ENCODE measurements at regions of chr19 and their contacts with region 1.

Region 1: GRCh38 chr19:41298348-41298964 is 11.5 kb upstream of the CCDC97 start:
- DNase-seq: peak; percentile 78
- H3K4me3 ChIP-seq: no peak overlapping the region
- H3K27ac ChIP-seq: peak overlapping the region; percentile 84 to 89 (median 85)
- H3K4me1 ChIP-seq: peaks cover 27 to 53% (median 40%) of the 10 kb centered on the region in 4 donors
- H3K27me3 ChIP-seq: no peaks in the 10 kb centered on the region
- CTCF ChIP-seq: no peak
- EP300 ChIP-seq: no peak
- POLR2A ChIP-seq: peak; percentile 47

Region 2: GRCh38 chr19:39996811-39997594 is 1301.5 kb before region 1 on chr19 and contains the start of gene ZNF546:
- in situ Hi-C with region 1: no loop called
- intact Hi-C with region 1: no loop called
- DNase-seq: peak; percentile 93
- H3K4me3 ChIP-seq: peak within 1 kb of the TSS; percentile 45 to 70 (median 55)
- H3K27ac ChIP-seq: peak within 1 kb of the TSS; percentile 72 to 87 (median 85)
- H3K4me1 ChIP-seq: peaks cover 10 to 16% (median 12%) of the 10 kb centered on the region in 4 donors
- H3K27me3 ChIP-seq: no peaks in the 10 kb centered on the region
- CTCF ChIP-seq: no peak
- EP300 ChIP-seq: no peak
- POLR2A ChIP-seq: peak; percentile 85
- total RNA-seq, gene ZNF546: 0.60 to 8.1 (median 2.4) TPM

Region 3: DNA sequence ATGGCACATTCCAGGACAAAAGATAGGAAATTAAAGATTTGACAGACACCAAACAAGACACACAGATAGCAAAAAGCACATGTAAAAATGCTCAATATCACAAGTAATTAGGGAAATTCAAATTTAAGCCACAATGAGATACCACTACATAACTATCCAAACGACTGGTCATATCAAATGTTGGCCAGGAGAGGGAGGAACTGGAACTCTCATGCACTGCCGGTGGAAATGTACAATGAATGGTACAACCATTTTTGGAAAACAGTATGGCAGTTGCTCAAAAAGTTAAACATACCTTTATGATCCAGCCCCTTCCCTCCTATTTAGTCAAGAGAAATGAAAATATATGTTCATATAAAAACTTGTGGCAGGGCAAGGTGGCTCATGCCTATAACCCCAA is 142.2 kb before region 1 on chr19:
- in situ Hi-C with region 1: no loop called
- intact Hi-C with region 1: no loop called
- DNase-seq: no peak
- H3K4me3 ChIP-seq: no peak overlapping the region
- H3K27ac ChIP-seq: no peak overlapping the region
- H3K4me1 ChIP-seq: peaks cover 0 to 4% (median 1%) of the 10 kb centered on the region in 4 donors
- H3K27me3 ChIP-seq: no peaks in the 10 kb centered on the region
- CTCF ChIP-seq: no peak
- EP300 ChIP-seq: no peak
- POLR2A ChIP-seq: no peak

Region 4: GRCh38 chr19:41226053-41226873 is 72.2 kb before region 1 on chr19:
- in situ Hi-C with region 1: no loop called
- intact Hi-C with region 1: no loop called
- DNase-seq: peak; percentile 77
- H3K4me3 ChIP-seq: peak overlapping the region; percentile 22 to 57 (median 48)
- H3K27ac ChIP-seq: peak overlapping the region; percentile 85 to 92 (median 88)
- H3K4me1 ChIP-seq: peaks cover 3 to 25% (median 20%) of the 10 kb centered on the region in 4 donors
- H3K27me3 ChIP-seq: peaks cover 3% of the 10 kb centered on the region
- CTCF ChIP-seq: peak in 3 of 5 experiments; percentile 13 to 40 (median 15)
- EP300 ChIP-seq: no peak
- POLR2A ChIP-seq: peak; percentile 57

Region 5: DNA sequence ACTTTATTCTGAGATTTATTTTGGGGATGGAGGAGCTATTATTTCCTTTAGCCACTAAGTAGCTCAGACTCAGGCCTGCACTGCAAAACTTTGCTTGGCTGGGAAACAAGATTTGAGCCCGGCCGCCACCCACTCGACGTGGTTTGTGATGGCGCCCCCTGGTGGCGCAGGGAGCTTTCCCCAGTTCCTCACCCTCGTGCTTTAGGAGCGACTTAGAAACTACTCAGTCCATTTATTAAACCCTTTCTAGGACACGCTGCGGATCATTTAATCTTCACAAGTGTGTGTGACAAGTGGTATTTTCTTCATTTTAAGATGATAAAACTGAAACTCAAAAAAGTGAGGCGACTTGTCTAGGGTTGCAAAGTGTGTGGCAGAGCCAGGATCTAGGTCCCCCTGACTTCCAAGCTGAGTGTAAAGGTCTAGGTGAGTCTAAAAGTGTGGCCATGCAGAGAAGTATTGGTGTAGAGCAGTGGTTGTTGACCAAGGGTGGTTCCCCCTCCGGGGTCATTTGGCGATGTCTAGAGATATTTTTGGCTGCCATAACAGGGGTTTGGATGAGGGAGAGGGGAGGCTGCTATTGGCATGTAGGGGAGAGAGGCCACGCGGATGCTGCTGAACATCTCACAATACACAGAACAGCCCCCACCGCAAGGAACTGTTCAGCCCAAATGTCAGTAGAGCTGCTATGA is 1142.0 kb after region 1 on chr19:
- in situ Hi-C with region 1: no loop called
- intact Hi-C with region 1: loop called (anchors 5 kb)
- DNase-seq: peak; percentile 84
- H3K4me3 ChIP-seq: no peak overlapping the region
- H3K27ac ChIP-seq: no peak overlapping the region
- H3K4me1 ChIP-seq: peaks cover 0 to 21% (median 6%) of the 10 kb centered on the region in 4 donors
- H3K27me3 ChIP-seq: no peaks in the 10 kb centered on the region
- CTCF ChIP-seq: peak; percentile 82 to 95 (median 91)
- EP300 ChIP-seq: no peak
- POLR2A ChIP-seq: no peak

Measured in transverse colon (tissue), 4 donors.